Mammary epithelial cell (primary cell): ENCODE measurements at regions of chr1 and their contacts with region 1.

Region 1: GRCh38 chr1:15918962-15919715 is 56.8 kb downstream of the ZBTB17 start:
- DNase-seq: peak; percentile 91
- H3K4me3 ChIP-seq: peak overlapping the region in 1 of 3 experiments; percentile 14
- H3K27ac ChIP-seq: peak overlapping the region; percentile 88
- H3K4me1 ChIP-seq: peaks cover 53% of the 10 kb centered on the region
- H3K27me3 ChIP-seq: no peaks in the 10 kb centered on the region
- CTCF ChIP-seq: no peak

Region 2: GRCh38 chr1:15736038-15736889 is 182.9 kb before region 1 on chr1 and contains the start of gene SLC25A34:
- CTCF ChIA-PET with region 1: no interaction called
- dilution Hi-C with region 1: no loop called
- in situ Hi-C with region 1: no loop called
- intact Hi-C with region 1: no loop called
- DNase-seq: no peak
- H3K4me3 ChIP-seq: no peak within 1 kb of the TSS
- H3K27ac ChIP-seq: no peak within 1 kb of the TSS
- H3K4me1 ChIP-seq: peaks cover 9% of the 10 kb centered on the region
- H3K27me3 ChIP-seq: no peaks in the 10 kb centered on the region
- CTCF ChIP-seq: no peak
- total RNA-seq, gene SLC25A34: 0.67 to 0.89 TPM

Region 3: GRCh38 chr1:15835741-15836510 is 83.2 kb before region 1 on chr1:
- CTCF ChIA-PET with region 1: no interaction called
- dilution Hi-C with region 1: no loop called
- in situ Hi-C with region 1: no loop called
- intact Hi-C with region 1: loop called (anchors 5 kb)
- DNase-seq: peak; percentile 99
- H3K4me3 ChIP-seq: peak overlapping the region; percentile 59 to 87 (median 65)
- H3K27ac ChIP-seq: peak overlapping the region; percentile 91
- H3K4me1 ChIP-seq: peaks cover 27% of the 10 kb centered on the region
- H3K27me3 ChIP-seq: no peaks in the 10 kb centered on the region
- CTCF ChIP-seq: no peak

Region 4: GRCh38 chr1:15847100-15847892 is 71.8 kb before region 1 on chr1 and contains the start of gene SPEN:
- CTCF ChIA-PET with region 1: no interaction called
- dilution Hi-C with region 1: no loop called
- in situ Hi-C with region 1: no loop called
- intact Hi-C with region 1: loop called (anchors 2 kb)
- DNase-seq: peak; percentile 97
- H3K4me3 ChIP-seq: peak within 1 kb of the TSS; percentile 87 to 99 (median 98)
- H3K27ac ChIP-seq: peak within 1 kb of the TSS; percentile 98
- H3K4me1 ChIP-seq: peaks cover 24% of the 10 kb centered on the region
- H3K27me3 ChIP-seq: no peaks in the 10 kb centered on the region
- CTCF ChIP-seq: peak in 1 of 2 donors; percentile 2
- total RNA-seq, gene SPEN: 32.3 to 48.1 TPM

Region 5: GRCh38 chr1:15949453-15950245 is 30.5 kb after region 1 on chr1:
- CTCF ChIA-PET with region 1: no interaction called
- dilution Hi-C with region 1: no loop called
- in situ Hi-C with region 1: no loop called
- intact Hi-C with region 1: loop called (anchors 2 kb)
- DNase-seq: peak; percentile 99
- H3K4me3 ChIP-seq: peak overlapping the region in 2 of 3 experiments; percentile 3 to 16
- H3K27ac ChIP-seq: peak overlapping the region; percentile 99
- H3K4me1 ChIP-seq: peaks cover 67% of the 10 kb centered on the region
- H3K27me3 ChIP-seq: no peaks in the 10 kb centered on the region
- CTCF ChIP-seq: no peak

Region 6: DNA sequence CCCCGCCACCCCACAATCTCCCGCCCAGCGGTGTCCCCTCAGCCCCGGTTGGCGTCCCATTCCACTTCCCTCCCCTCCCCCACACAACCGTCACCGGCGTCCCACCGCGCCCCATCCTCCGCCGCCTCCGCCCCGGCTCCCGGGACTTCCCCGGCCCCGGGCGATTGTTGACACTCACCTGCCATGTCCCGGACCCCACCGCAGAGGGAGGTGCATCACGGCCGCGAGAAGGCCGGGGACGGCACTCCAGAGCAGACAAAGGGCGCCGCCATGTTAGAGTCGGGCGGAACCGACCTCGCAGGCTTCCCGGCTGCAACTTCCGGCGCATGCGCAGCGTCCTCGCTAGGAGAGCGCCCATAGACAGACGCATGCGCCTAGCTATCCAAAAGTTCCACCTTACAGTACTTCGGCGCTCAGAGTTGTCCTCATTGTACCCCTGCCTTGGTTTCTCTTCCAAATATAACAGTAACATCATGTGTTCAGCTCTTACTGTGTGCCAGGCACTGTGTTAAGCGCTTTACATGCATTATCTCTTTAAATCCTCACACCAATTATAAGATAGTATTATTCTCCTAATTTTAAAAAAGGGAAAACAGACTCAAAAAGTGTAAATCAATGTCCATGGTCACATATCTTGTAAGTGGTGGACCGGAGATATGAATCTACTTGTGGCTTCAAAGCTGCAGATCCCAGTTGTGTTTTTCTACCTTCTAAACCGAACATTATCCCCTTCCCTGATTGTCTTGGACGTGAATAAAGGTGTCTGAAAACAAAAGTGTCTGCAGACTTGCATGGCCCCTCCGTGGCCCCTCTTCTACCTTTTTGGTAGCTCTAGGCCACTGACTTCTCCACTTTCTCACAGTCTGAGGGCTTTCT is 56.9 kb after region 1 on chr1 and contains the start of gene ZBTB17:
- CTCF ChIA-PET with region 1: no interaction called
- dilution Hi-C with region 1: no loop called
- in situ Hi-C with region 1: no loop called
- intact Hi-C with region 1: loop called (anchors 5 kb)
- DNase-seq: peak; percentile 87
- H3K4me3 ChIP-seq: peak within 1 kb of the TSS; percentile 61 to 70 (median 62)
- H3K27ac ChIP-seq: peak within 1 kb of the TSS; percentile 52
- H3K4me1 ChIP-seq: peaks cover 8% of the 10 kb centered on the region
- H3K27me3 ChIP-seq: no peaks in the 10 kb centered on the region
- CTCF ChIP-seq: no peak
- total RNA-seq, gene ZBTB17: 26.2 to 36.6 TPM

Region 7: GRCh38 chr1:15994590-15995351 is 75.6 kb after region 1 on chr1:
- CTCF ChIA-PET with region 1: no interaction called
- dilution Hi-C with region 1: no loop called
- in situ Hi-C with region 1: no loop called
- intact Hi-C with region 1: loop called (anchors 5 kb)
- DNase-seq: peak; percentile 40
- H3K4me3 ChIP-seq: no peak overlapping the region
- H3K27ac ChIP-seq: no peak overlapping the region
- H3K4me1 ChIP-seq: no peaks in the 10 kb centered on the region
- H3K27me3 ChIP-seq: no peaks in the 10 kb centered on the region
- CTCF ChIP-seq: peak; percentile 68 to 84

Region 8: DNA sequence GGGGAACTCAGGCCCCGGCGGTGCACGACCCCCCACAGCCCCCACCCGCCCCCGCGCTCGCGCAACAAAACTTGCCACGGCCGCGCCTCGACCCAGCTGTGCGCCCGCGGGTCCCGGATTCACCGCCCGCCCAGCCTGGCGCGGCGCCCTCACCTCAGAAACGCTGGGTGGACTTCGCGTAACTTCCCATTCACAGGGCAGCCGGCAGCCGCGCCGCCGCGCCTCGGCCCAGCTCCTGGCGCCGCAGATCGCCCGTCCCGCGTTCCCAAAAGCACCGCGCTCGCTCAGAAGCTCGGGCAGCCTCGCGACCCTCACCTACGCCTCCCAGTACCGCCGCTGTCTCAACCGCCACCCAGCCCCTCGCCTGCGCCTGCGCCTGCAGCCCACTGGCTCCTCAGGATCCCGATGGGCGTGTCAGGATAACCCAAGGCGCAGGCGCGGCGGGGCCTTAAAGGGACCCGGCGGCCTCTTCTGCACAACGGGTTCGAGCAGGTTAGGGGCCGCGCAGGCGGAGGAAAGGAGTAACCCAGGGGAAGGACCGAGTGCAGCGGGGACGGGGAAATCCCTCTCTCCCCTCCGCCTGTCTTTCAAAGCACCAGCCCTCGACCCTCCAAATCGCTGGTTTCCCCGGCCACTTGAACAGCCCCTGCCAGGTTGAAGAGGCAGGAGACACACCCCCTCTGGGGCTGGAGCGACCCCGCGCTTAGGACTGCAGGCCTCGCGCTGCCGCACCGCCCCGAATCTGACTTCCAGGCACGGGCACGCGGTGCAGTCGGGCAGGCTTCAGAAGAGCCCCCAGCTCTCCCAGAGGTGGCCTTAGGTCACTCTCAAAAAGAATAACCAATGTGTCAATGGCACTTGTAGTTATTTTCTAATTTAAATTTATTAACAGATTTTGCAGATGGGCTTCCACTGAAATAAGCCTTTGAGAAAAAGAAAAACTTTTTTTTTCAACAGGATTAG is 694.3 kb after region 1 on chr1 and contains the start of gene NBPF1:
- CTCF ChIA-PET with region 1: no interaction called
- dilution Hi-C with region 1: no loop called
- in situ Hi-C with region 1: loop called in 1 of 2 experiments (anchors 25 kb)
- intact Hi-C with region 1: no loop called
- DNase-seq: peak; percentile 94
- H3K4me3 ChIP-seq: peak within 1 kb of the TSS; percentile 74 to 97 (median 78)
- H3K27ac ChIP-seq: peak within 1 kb of the TSS; percentile 30
- H3K4me1 ChIP-seq: peaks cover 16% of the 10 kb centered on the region
- H3K27me3 ChIP-seq: no peaks in the 10 kb centered on the region
- CTCF ChIP-seq: no peak
- total RNA-seq, gene NBPF1: 22.7 to 31.9 TPM